PC-3 (cell line): ENCODE measurements at regions of chr5 and their contacts with region 1.

Region 1: GRCh38 chr5:170633235-170634081 is 129.6 kb downstream of the KCNIP1 start:
- DNase-seq: peak; percentile 48
- ATAC-seq: peak; percentile 68
- H3K4me3 ChIP-seq: peak overlapping the region; percentile 60
- H3K27ac ChIP-seq: peak overlapping the region; percentile 37; the same call in 1 of the 2 replicates
- H3K4me1 ChIP-seq: peaks cover 11% of the 10 kb centered on the region
- H3K27me3 ChIP-seq: no peaks in the 10 kb centered on the region
- CTCF ChIP-seq: peak; percentile 2; the same call in 1 of the 2 replicates

Region 2: GRCh38 chr5:170404402-170404801 is 229.1 kb before region 1 on chr5:
- CTCF ChIA-PET with region 1: no interaction called
- POLR2A ChIA-PET with region 1: no interaction called
- intact Hi-C with region 1: no loop called
- DNase-seq: no peak
- ATAC-seq: no peak
- H3K4me3 ChIP-seq: no peak overlapping the region
- H3K27ac ChIP-seq: no peak overlapping the region
- H3K4me1 ChIP-seq: no peaks in the 10 kb centered on the region
- H3K27me3 ChIP-seq: peaks cover 25% of the 10 kb centered on the region
- CTCF ChIP-seq: no peak

Region 3: GRCh38 chr5:170451747-170452365 is 181.6 kb before region 1 on chr5:
- CTCF ChIA-PET with region 1: interaction called, 10 read pairs
- POLR2A ChIA-PET with region 1: no interaction called
- intact Hi-C with region 1: no loop called
- DNase-seq: peak; percentile 32
- ATAC-seq: no peak
- H3K4me3 ChIP-seq: no peak overlapping the region
- H3K27ac ChIP-seq: no peak overlapping the region
- H3K4me1 ChIP-seq: no peaks in the 10 kb centered on the region
- H3K27me3 ChIP-seq: peaks cover 13% of the 10 kb centered on the region; the same call in 1 of the 2 replicates
- CTCF ChIP-seq: no peak

Region 4: DNA sequence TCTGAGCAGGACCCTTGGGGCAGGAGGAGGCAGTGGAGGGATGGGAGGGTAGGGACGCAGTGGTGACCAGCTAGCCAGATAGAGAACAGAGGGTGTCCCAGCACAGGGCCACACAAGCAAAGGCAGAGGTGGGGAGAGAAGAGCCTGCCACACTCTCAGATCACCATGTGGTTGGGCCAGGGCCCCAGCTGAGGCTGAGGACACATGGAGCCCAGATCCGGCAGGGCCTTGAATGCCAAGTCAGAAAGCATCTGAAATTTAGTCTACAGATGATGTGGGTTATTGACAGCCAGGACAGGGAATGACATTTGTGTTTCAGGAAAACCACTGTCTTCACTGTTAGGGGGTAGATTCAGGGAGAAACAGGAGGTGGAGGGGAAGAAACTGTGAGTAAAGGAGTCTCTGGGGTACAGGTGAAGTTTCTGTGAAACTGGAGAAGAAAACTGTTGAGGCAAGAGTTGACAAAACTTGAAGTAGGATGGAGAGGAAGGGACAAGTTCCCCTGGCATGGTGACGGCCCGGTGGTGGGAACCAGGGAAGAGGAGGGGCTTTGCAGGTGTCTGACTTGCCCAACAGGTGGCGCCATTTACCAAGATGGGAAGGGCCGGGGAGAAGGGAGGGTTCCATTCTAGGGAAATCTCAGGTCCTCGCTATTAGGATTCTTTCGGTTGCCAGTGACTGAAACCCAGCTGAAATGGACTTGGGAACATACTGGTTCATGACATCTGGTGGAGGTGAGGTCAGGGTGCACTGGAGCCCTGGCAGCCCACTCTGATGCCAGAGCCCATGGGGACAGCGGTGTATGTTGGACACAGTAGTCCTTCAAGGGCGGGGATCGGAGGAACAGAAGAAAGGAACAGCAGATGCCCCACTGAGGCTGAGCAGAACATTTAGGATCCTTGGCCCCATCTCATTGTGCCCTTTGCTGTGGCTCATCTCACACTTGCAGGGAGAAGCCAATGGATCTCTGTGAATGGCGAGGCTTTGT is 29.6 kb before region 1 on chr5:
- CTCF ChIA-PET with region 1: no interaction called
- POLR2A ChIA-PET with region 1: no interaction called
- intact Hi-C with region 1: loop called (anchors 2 kb)
- DNase-seq: peak; percentile 58
- ATAC-seq: peak; percentile 67
- H3K4me3 ChIP-seq: no peak overlapping the region
- H3K27ac ChIP-seq: no peak overlapping the region
- H3K4me1 ChIP-seq: no peaks in the 10 kb centered on the region
- H3K27me3 ChIP-seq: no peaks in the 10 kb centered on the region; the same call in 1 of the 2 replicates
- CTCF ChIP-seq: peak; percentile 68

Region 5: GRCh38 chr5:170655476-170655875 is 22.0 kb after region 1 on chr5:
- CTCF ChIA-PET with region 1: no interaction called
- POLR2A ChIA-PET with region 1: no interaction called
- intact Hi-C with region 1: no loop called
- DNase-seq: no peak
- ATAC-seq: no peak
- H3K4me3 ChIP-seq: no peak overlapping the region
- H3K27ac ChIP-seq: no peak overlapping the region
- H3K4me1 ChIP-seq: no peaks in the 10 kb centered on the region
- H3K27me3 ChIP-seq: peaks cover 30% of the 10 kb centered on the region
- CTCF ChIP-seq: no peak

Region 6: GRCh38 chr5:171031977-171032376 is 398.5 kb after region 1 on chr5:
- CTCF ChIA-PET with region 1: no interaction called
- POLR2A ChIA-PET with region 1: no interaction called
- intact Hi-C with region 1: no loop called
- DNase-seq: no peak
- ATAC-seq: no peak
- H3K4me3 ChIP-seq: no peak overlapping the region
- H3K27ac ChIP-seq: no peak overlapping the region
- H3K4me1 ChIP-seq: no peaks in the 10 kb centered on the region
- H3K27me3 ChIP-seq: no peaks in the 10 kb centered on the region
- CTCF ChIP-seq: no peak